BJ (cell line): ENCODE measurements at regions of chr10 and their contacts with region 1.

Region 1: DNA sequence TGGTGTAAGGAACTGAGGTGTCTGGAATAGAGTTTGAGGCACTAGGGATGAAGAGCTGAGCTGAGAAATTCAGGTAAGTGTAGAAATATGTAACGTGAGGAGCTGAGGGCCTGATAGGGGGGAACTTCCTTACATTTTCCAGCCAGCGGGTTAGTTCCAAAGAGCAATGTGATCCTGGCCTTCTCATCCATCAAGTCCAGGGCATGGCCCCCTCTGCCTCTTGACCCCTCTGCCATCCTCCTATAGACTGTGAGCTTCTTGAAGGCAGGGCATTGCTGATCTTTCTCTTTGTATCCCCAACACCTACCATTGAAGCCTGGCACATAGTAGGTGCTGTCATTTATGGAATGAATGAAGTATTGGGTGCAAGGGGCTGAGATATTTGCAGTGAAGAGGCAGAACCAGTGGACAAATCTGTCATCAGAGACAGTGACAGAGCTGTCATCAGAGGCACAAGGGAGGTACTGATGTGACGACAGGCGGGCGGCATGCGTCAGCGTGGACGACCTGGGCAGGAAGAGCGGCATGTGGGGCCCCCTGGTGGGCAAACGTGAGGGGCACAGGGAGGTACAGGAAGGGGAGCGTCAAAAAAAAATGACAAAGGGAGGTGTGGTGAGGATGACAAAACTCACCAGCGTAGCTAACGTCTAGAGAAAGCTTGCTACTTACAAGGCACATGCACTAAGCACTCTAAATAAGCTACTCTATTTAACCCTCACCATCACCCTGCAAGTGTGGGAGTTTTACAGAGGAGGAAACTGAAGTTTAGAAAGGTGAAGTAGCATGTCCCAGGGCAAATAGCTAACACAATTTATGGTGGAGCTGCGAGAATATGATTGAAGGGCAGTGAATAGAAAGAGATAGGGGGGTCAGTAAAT is 5.2 kb upstream of the CAMK2G start:
- DNase-seq: no peak
- H3K4me3 ChIP-seq: no peak overlapping the region
- H3K27me3 ChIP-seq: no peaks in the 10 kb centered on the region
- CTCF ChIP-seq: peak; percentile 93

Region 2: DNA sequence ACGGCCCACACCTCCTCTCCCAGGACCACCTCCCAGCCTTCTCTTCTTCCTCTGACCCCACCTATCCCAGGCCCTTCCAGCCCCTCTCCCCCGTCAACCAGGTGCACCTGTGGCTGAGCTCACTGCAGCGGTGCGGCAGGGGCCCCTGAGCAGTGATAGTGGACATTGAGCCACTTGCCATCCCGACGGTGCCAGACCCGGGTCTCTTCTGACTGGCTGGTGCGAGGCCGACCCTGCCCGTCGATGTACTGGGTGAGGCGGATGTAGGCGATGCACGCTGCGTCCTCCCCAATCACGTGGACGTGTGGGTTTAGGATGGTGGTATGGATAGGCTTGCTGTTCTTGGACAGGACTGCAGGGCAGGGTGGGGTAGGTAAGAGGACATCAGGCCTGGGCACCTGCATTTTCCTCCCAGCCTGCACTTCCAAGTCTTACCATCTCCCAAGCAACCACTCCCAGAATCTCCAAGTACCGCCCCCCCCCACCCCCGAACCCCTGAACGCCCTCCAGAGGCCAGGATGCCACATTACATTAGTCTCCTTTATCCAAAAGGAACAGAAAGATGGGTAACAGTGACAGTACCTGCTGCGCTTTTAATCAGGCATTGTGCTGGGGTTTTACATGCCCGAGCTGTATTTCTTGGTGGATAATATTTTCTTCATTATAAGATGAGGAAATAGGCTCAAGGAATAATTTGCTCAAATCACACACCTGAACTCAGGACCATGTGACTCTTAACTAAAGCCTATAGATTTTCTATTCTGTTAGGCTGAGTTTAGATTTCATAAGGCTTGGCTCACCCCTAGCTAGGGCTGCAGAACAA is 64.4 kb before region 1 on chr10:
- CTCF ChIA-PET with region 1: interaction called, 12 read pairs
- POLR2A ChIA-PET with region 1: no interaction called
- DNase-seq: no peak
- H3K4me3 ChIP-seq: no peak overlapping the region
- H3K27me3 ChIP-seq: no peaks in the 10 kb centered on the region
- CTCF ChIP-seq: peak; percentile 38

Region 3: DNA sequence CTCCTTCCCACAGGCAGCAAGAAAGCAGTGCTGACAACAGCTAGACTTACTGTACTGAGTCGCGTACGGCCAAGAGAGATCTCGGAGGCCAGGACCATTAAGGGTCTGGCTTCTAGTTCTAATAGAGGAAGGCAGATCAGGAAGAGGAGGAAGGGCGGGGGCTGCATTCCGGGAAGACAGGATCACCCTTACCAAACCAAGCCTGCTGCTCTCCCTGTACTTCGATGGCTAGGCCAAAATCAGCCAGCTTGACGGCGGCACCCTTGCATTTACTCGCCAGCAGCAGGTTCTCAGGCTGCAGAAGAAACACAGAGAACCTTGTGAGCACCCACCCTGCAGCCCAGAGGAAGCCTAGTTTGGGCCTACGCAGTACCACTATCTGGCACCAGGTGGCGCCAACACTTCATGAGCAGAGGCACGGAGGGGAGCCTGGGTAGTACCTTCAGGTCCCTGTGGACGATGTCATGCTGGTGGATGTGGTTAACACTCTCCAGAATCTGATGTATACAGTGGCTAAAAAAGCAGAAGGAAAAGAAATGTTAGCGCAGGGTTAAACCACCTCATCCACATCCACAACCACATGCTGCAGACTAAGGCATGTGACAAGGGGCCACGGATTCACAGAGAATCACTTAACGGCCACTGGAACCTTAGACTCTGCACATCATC is 30.6 kb before region 1 on chr10:
- CTCF ChIA-PET with region 1: interaction called, 337 read pairs
- POLR2A ChIA-PET with region 1: no interaction called
- DNase-seq: no peak
- H3K4me3 ChIP-seq: no peak overlapping the region
- H3K27me3 ChIP-seq: no peaks in the 10 kb centered on the region
- CTCF ChIP-seq: peak; percentile 99

Region 4: GRCh38 chr10:73865459-73866442 is 13.8 kb before region 1 on chr10:
- CTCF ChIA-PET with region 1: interaction called, 17 read pairs
- POLR2A ChIA-PET with region 1: no interaction called
- DNase-seq: no peak
- H3K4me3 ChIP-seq: no peak overlapping the region
- H3K27me3 ChIP-seq: no peaks in the 10 kb centered on the region
- CTCF ChIP-seq: no peak

Region 5: DNA sequence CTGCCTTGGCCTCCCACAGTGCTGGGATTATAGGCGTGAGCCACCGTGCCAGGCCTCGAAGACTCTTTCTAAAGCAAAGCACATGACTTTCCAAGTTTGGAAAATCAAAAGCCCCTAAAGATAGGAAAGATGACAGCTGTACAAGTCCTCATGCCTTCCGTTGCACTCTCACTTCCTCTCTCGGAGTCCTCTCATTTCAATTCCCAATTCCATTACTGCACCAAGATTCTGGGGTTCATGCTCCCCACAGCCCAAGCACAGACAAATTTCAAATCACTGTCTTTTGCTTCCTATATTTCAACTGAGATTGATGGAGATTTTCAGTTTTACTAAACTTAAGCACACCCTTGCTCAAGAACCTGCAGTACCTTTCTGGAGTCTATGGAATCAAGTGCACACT is 20.5 kb after region 1 on chr10:
- CTCF ChIA-PET with region 1: no interaction called
- POLR2A ChIA-PET with region 1: no interaction called
- DNase-seq: no peak
- H3K4me3 ChIP-seq: no peak overlapping the region
- H3K27me3 ChIP-seq: no peaks in the 10 kb centered on the region
- CTCF ChIP-seq: no peak

Region 6: DNA sequence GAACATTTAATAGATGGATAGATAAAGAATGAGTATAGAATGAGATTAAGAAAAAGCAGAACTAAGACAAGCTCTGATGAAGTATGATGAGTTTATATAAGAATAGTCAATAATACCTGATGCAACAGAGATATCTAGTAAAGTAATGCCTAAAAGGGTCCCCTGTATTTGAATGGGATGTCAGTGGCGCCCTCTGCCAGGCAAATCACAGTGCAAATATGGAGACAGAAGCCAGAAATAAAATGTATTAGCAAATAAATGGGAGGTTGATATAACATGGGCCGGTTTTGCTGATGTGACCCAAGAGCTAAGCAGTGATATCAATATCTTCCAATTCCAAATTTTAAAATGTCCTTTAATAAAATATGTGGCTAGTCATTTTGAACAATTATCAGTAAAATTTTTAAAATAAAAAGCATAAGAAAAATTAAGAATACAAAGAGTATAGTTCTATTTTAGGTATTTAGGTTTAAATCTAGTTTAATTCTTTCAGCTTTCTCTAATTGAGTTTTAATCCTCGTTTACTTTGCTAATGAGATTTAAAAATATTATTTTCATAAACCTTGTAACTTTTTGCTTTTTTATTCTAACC is 334.1 kb after region 1 on chr10:
- CTCF ChIA-PET with region 1: interaction called, 10 read pairs
- POLR2A ChIA-PET with region 1: no interaction called
- DNase-seq: no peak
- H3K4me3 ChIP-seq: no peak overlapping the region
- H3K27me3 ChIP-seq: no peaks in the 10 kb centered on the region
- CTCF ChIP-seq: peak; percentile 63